A673 (cell line): ENCODE measurements at regions of chr5 and their contacts with region 1.

Region 1: DNA sequence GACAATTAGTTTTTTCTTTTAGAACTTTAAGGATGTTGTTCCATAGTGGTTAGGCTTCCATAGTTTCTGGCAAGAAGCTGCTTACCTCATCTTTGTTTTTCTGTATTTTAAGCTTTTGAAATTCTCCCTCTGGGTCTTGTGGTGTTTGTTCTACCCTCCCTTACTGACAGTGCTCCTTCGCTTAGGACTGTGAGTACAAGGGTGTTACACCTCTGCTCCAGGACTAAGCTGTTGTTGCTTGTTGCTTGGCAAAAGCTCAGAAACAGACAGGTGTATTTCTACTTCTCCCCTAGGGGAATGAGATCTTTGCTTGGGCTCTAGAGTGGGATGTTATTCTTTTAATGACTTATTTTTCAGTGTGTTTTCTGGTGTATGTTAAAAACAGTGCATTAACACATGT is 225.2 kb downstream of the WDR70 start:
- DNase-seq: no peak
- H3K4me3 ChIP-seq: no peak overlapping the region
- H3K27ac ChIP-seq: no peak overlapping the region
- H3K4me1 ChIP-seq: no peaks in the 10 kb centered on the region
- H3K27me3 ChIP-seq: no peaks in the 10 kb centered on the region
- CTCF ChIP-seq: no peak

Region 2: GRCh38 chr5:37272564-37272963 is 331.7 kb before region 1 on chr5:
- CTCF ChIA-PET with region 1: no interaction called
- POLR2A ChIA-PET with region 1: no interaction called
- intact Hi-C with region 1: no loop called
- DNase-seq: no peak
- H3K4me3 ChIP-seq: no peak overlapping the region
- H3K27ac ChIP-seq: no peak overlapping the region
- H3K4me1 ChIP-seq: no peaks in the 10 kb centered on the region
- H3K27me3 ChIP-seq: no peaks in the 10 kb centered on the region
- CTCF ChIP-seq: no peak

Region 3: GRCh38 chr5:37619353-37619752 is 15.1 kb after region 1 on chr5:
- CTCF ChIA-PET with region 1: no interaction called
- POLR2A ChIA-PET with region 1: no interaction called
- intact Hi-C with region 1: no loop called
- DNase-seq: no peak
- H3K4me3 ChIP-seq: no peak overlapping the region
- H3K27ac ChIP-seq: peak overlapping the region; percentile 35
- H3K4me1 ChIP-seq: no peaks in the 10 kb centered on the region
- H3K27me3 ChIP-seq: no peaks in the 10 kb centered on the region
- CTCF ChIP-seq: no peak

Region 4: DNA sequence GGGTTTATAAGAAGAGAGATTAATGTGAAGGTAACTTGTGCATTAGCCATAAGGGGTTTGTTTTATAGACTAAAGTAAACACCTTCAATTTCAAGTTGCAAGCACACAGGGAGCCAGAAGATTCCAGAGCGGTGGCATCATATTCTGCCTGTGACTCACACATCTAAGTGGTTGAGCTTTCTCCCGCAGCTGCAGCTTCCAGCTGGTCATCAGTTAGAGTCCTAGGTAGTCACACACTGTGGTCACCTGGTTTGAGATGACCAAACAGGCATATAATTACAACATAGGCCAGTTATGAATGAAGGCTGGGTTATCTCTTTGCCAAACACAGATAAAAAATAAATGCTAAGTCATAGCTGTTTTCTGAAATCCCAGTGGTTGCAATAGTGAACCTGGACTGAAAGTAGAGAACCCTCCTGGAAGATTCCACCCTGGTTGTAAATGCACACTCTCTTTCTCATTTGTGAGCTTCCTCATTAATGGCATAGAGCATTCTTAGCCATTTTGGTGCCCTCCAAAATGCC is 64.3 kb after region 1 on chr5:
- CTCF ChIA-PET with region 1: no interaction called
- POLR2A ChIA-PET with region 1: no interaction called
- intact Hi-C with region 1: loop called (anchors 10 kb)
- DNase-seq: peak; percentile 72
- H3K4me3 ChIP-seq: no peak overlapping the region
- H3K27ac ChIP-seq: no peak overlapping the region
- H3K4me1 ChIP-seq: peaks cover 29% of the 10 kb centered on the region
- H3K27me3 ChIP-seq: no peaks in the 10 kb centered on the region
- CTCF ChIP-seq: no peak